ENCODE measurements at regions of chr22 and their contacts with region 1.

Region 1: DNA sequence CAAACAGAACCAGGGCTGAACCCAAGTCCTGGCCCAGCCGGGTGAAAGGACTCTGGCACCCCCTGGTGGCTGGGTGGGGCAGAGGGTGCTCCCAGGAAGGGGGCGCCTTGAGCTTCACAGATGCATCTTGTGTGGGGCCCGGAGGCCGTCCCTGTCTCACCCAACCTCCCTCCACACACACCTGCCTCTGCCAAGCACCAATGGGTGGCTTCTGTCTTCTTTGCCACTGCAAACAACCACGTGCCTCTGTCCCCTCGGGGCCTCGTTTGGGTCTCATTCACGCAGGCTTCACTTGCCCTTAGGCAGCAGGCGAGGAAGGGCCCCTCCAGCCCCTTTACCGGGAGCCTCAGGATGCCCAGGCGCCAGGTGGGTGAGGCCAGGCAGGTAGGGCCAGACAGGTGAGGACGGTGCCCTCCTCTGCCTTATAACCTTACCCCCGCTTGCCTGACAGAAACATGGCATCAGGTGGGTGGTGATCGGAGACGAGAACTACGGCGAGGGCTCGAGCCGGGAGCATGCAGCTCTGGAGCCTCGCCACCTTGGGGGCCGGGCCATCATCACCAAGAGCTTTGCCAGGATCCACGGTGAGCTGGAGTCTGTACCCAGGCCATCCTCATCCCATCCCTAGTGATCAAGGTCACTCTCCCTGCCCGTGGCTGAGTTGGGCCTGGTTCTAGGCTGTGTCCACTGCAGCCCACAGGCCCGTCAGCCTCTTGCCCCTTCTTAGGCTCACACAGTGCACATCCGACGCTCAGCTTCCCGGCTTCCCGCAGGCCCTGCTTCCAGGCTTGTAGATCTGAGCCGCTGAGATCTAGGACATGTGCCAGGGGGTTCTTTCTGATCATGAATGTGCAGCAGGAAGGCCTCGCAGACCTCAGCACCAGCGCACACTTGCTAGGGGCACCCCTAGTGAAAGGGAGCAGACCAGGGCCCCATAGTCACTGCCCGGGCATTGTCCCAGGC is 17.2 kb downstream of the POLR3H start:
- DNase-seq: peak in 6 of 10 donors; percentile 55 to 93 (median 74)

Region 2: GRCh38 chr22:40922484-40923303 is 604.4 kb before region 1 on chr22:
- intact Hi-C with region 1: loop called (anchors 2 kb)
- DNase-seq: no peak

Region 3: DNA sequence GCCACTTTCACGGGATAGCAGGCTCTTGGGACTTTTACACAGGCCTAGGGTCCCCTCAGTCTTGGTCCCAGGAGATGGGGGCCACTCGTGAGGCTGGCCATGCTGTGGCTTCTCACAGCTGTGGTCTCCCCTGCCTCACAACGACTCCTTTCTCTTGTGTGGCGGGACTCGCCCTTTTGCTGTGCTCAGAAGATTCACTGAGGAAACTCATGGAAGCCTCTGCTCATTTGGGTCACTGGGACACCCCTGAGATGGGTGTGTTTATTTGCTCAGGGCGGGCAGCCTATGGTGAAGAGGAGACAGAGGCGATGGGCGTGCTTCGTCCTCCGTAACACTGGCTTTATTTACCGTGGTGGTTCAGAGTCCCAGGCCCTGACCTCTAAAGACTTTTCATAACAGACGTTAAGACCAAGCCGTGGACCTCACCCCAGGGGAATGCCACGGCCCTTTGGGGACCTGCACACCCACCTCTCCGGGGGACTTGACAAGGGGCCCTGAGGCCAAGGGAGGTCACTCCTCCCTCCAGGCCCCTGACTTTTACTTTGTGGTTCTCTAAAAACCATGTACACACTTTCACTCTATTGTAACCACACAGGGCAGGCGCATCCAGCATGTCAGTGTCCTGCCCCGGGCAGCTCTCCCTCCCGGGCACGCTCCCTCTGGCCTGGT is 129.8 kb before region 1 on chr22:
- intact Hi-C with region 1: loop called (anchors 5 kb)
- DNase-seq: no peak